Activated B cell treated with CpG ODN at 0.5 μM for 24 hours (primary cell): ENCODE measurements at regions of chr1 and their contacts with region 1.

Region 1: GRCh38 chr1:27192039-27192529 is 37.2 kb upstream of the SLC9A1 start:
- DNase-seq: no peak
- ATAC-seq: no peak
- H3K4me3 Mint-ChIP-seq: no peak overlapping the region
- H3K27ac Mint-ChIP-seq: no peak overlapping the region
- H3K4me1 Mint-ChIP-seq: no peaks in the 10 kb centered on the region
- H3K27me3 Mint-ChIP-seq: peaks cover 2% of the 10 kb centered on the region
- CTCF ChIP-seq: no peak

Region 2: GRCh38 chr1:26907071-26907917 is 284.8 kb before region 1 on chr1:
- CTCF ChIA-PET with region 1: no interaction called
- POLR2A ChIA-PET with region 1: no interaction called
- intact Hi-C with region 1: no loop called
- DNase-seq: no peak
- ATAC-seq: no peak
- H3K4me3 Mint-ChIP-seq: no peak overlapping the region
- H3K27ac Mint-ChIP-seq: no peak overlapping the region
- H3K4me1 Mint-ChIP-seq: no peaks in the 10 kb centered on the region
- H3K27me3 Mint-ChIP-seq: no peaks in the 10 kb centered on the region
- CTCF ChIP-seq: no peak

Region 3: GRCh38 chr1:27097484-27097917 is 94.6 kb before region 1 on chr1:
- CTCF ChIA-PET with region 1: interaction called, 30 read pairs
- POLR2A ChIA-PET with region 1: no interaction called
- intact Hi-C with region 1: no loop called
- DNase-seq: peak; percentile 61
- ATAC-seq: peak; percentile 40
- H3K4me3 Mint-ChIP-seq: no peak overlapping the region
- H3K27ac Mint-ChIP-seq: no peak overlapping the region
- H3K4me1 Mint-ChIP-seq: peaks cover 22% of the 10 kb centered on the region
- H3K27me3 Mint-ChIP-seq: no peaks in the 10 kb centered on the region
- CTCF ChIP-seq: peak; percentile 72

Region 4: GRCh38 chr1:27102707-27103491 is 89.2 kb before region 1 on chr1:
- CTCF ChIA-PET with region 1: interaction called, 30 read pairs
- POLR2A ChIA-PET with region 1: no interaction called
- intact Hi-C with region 1: no loop called
- DNase-seq: peak; percentile 85
- ATAC-seq: peak; percentile 33
- H3K4me3 Mint-ChIP-seq: no peak overlapping the region
- H3K27ac Mint-ChIP-seq: no peak overlapping the region
- H3K4me1 Mint-ChIP-seq: peaks cover 41% of the 10 kb centered on the region
- H3K27me3 Mint-ChIP-seq: no peaks in the 10 kb centered on the region
- CTCF ChIP-seq: no peak

Region 5: GRCh38 chr1:27111626-27112573 is 80.2 kb before region 1 on chr1:
- CTCF ChIA-PET with region 1: interaction called, 12 read pairs
- POLR2A ChIA-PET with region 1: interaction called, 6 read pairs
- intact Hi-C with region 1: no loop called
- DNase-seq: no peak
- ATAC-seq: peak; percentile 97
- H3K4me3 Mint-ChIP-seq: peak overlapping the region; percentile 48
- H3K27ac Mint-ChIP-seq: peak overlapping the region; percentile 80
- H3K4me1 Mint-ChIP-seq: peaks cover 24% of the 10 kb centered on the region
- H3K27me3 Mint-ChIP-seq: no peaks in the 10 kb centered on the region
- CTCF ChIP-seq: no peak

Region 6: GRCh38 chr1:27161594-27161993 is 30.5 kb before region 1 on chr1:
- CTCF ChIA-PET with region 1: interaction called, 5 read pairs
- POLR2A ChIA-PET with region 1: no interaction called
- intact Hi-C with region 1: loop called (anchors 5 kb)
- DNase-seq: no peak
- ATAC-seq: peak; percentile 99
- H3K4me3 Mint-ChIP-seq: peak overlapping the region; percentile 74
- H3K27ac Mint-ChIP-seq: peak overlapping the region; percentile 91
- H3K4me1 Mint-ChIP-seq: peaks cover 20% of the 10 kb centered on the region
- H3K27me3 Mint-ChIP-seq: no peaks in the 10 kb centered on the region
- CTCF ChIP-seq: no peak

Region 7: GRCh38 chr1:27234049-27234882 is 42.2 kb after region 1 on chr1 and contains the start of gene WDTC1:
- CTCF ChIA-PET with region 1: no interaction called
- POLR2A ChIA-PET with region 1: no interaction called
- intact Hi-C with region 1: loop called (anchors 5 kb)
- DNase-seq: peak; percentile 94
- ATAC-seq: peak; percentile 91
- H3K4me3 Mint-ChIP-seq: peak within 1 kb of the TSS; percentile 98
- H3K27ac Mint-ChIP-seq: peak within 1 kb of the TSS; percentile 90
- H3K4me1 Mint-ChIP-seq: peaks cover 30% of the 10 kb centered on the region
- H3K27me3 Mint-ChIP-seq: no peaks in the 10 kb centered on the region
- CTCF ChIP-seq: no peak
- total RNA-seq, gene WDTC1: 62.8 and 65.1 TPM in 2 replicates

Region 8: GRCh38 chr1:27307874-27308598 is 116.0 kb after region 1 on chr1:
- CTCF ChIA-PET with region 1: no interaction called
- POLR2A ChIA-PET with region 1: no interaction called
- intact Hi-C with region 1: no loop called
- DNase-seq: no peak
- ATAC-seq: no peak
- H3K4me3 Mint-ChIP-seq: no peak overlapping the region
- H3K27ac Mint-ChIP-seq: no peak overlapping the region
- H3K4me1 Mint-ChIP-seq: no peaks in the 10 kb centered on the region
- H3K27me3 Mint-ChIP-seq: no peaks in the 10 kb centered on the region
- CTCF ChIP-seq: no peak